ENCODE measurements at regions of chr12 and their contacts with region 1.

Region 1: GRCh38 chr12:9869307-9870161 is at the start of gene CLEC2B:
- DNase-seq: peak in 4 of 14 experiments; percentile 33 to 86 (median 78)
- ATAC-seq: peak; percentile 68
- H3K4me3 ChIP-seq: peak within 1 kb of the TSS; percentile 76
- H3K4me3 Mint-ChIP-seq: peak within 1 kb of the TSS; percentile 92
- H3K27ac ChIP-seq: peak within 1 kb of the TSS; percentile 90 to 91
- H3K27ac Mint-ChIP-seq: peak within 1 kb of the TSS; percentile 98
- H3K4me1 ChIP-seq: peaks cover 7% of the 10 kb centered on the region
- H3K4me1 Mint-ChIP-seq: peaks cover 34% of the 10 kb centered on the region
- H3K27me3 ChIP-seq: no peaks in the 10 kb centered on the region
- H3K27me3 Mint-ChIP-seq: no peaks in the 10 kb centered on the region
- CTCF ChIP-seq: no peak
- total RNA-seq, gene CLEC2B: 152 to 155 TPM

Region 2: DNA sequence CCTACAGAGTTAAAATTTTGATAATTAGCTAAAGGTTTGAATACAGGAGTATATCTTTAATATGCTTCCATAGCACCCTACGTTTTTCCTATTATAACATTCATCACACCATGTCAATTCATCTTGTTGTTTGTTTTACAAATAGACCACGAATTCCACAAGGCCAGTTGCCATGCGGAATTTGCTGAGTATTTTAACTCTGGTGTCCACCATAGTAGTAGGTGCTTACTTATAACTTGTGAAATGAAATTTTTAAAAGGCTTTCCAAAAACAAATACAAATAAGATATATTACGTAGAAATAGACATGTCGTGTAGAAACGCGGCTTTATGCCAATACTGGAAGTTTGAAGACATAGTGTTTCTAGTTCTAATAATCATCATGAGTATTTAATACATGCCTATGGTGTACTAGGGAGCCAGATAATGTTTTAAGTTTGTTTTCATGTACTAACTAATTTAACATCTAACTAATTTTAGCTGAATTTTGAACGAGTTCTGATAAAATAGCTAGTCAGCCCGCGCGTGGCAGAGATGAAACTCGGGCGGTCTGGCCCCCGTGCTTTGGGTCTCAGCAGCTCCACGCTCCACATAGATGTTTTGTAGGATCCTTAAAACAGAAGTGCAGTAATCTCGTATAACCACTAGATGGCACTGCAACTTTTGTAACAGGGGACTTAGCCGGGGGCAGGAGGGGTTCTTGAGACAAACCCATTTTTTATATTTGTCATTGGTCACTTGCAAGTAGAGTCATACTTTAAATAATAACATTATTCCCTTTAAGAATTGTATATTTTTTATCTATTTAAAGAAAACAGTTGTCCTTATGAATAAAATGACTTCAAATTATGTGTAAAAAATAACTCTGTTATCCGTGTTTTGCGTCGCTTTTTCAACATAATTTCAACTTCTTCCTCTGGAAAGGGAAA is 119.0 kb before region 1 on chr12:
- CTCF ChIA-PET with region 1: interaction called, 9 read pairs
- POLR2A ChIA-PET with region 1: interaction called, 145 read pairs
- intact Hi-C with region 1: loop called (anchors 2 to 5 kb)
- DNase-seq: peak in 13 of 14 experiments; percentile 13 to 87 (median 44)
- ATAC-seq: peak; percentile 48
- H3K4me3 ChIP-seq: peak overlapping the region; percentile 10
- H3K4me3 Mint-ChIP-seq: peak overlapping the region; percentile 63
- H3K27ac ChIP-seq: no peak overlapping the region
- H3K27ac Mint-ChIP-seq: peak overlapping the region; percentile 80
- H3K4me1 ChIP-seq: peaks cover 14% of the 10 kb centered on the region
- H3K4me1 Mint-ChIP-seq: peaks cover 54% of the 10 kb centered on the region
- H3K27me3 ChIP-seq: no peaks in the 10 kb centered on the region
- H3K27me3 Mint-ChIP-seq: no peaks in the 10 kb centered on the region
- CTCF ChIP-seq: peak; percentile 86

Region 3: DNA sequence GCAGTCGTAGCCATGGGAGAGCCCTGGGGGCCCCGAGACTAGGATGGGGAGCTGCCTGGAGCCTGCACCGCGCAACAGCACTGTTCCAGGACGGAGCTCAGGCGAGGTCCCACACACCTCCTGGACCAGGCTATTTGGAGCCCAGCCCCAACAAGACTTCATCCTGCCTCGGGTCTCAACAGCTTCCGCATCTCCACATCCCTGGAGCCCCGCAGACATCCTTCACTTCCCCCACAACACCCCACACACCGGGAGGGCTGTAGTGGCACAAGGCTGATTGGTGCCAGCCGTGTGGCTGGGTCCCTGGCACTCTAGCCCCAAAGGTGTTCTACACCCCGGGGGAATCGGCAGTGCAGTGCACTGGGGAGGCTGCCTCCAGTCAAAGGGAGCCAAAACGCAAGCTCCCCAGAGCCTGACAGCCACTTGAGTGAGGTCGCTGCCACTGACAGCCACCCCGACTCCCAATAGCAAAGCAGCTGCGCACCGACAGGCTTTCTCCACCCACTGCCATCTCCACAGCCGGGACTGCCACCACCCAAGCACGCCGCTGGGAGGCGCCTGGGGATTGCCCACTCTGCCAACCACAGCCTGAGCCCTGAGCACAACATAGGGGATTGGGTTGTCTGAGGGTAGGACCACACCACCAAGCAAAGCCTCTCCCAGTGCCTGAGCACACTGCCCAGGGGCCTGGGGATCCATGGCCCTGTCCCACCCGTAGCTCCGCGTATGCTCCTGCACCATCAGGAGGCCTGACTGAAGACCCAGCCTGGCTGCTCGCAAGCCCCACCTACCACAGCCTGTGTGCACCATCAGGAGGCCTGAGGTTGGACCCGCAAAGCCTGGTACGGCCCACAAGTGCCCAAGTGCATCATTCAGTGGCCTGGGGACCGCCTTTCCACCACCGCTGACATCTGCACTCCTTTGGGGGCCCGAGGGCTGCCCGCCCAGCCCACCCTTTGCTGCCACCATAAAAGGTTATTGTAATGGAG is 55.4 kb before region 1 on chr12:
- CTCF ChIA-PET with region 1: interaction called, 8 read pairs
- POLR2A ChIA-PET with region 1: interaction called, 13 read pairs
- intact Hi-C with region 1: loop called (anchors 5 to 10 kb)
- DNase-seq: peak; percentile 88 to 95 (median 92)
- ATAC-seq: peak; percentile 97
- H3K4me3 ChIP-seq: peak overlapping the region; percentile 59
- H3K4me3 Mint-ChIP-seq: peak overlapping the region; percentile 89
- H3K27ac ChIP-seq: peak overlapping the region in 1 of 2 donors; percentile 31
- H3K27ac Mint-ChIP-seq: peak overlapping the region; percentile 92
- H3K4me1 ChIP-seq: peaks cover 12% of the 10 kb centered on the region
- H3K4me1 Mint-ChIP-seq: peaks cover 10% of the 10 kb centered on the region
- H3K27me3 ChIP-seq: peaks cover 0 to 2% of the 10 kb centered on the region in 2 experiments
- H3K27me3 Mint-ChIP-seq: no peaks in the 10 kb centered on the region
- CTCF ChIP-seq: peak; percentile 92

Region 4: GRCh38 chr12:9906873-9907272 is 37.3 kb after region 1 on chr12:
- CTCF ChIA-PET with region 1: no interaction called
- POLR2A ChIA-PET with region 1: interaction called, 42 read pairs
- intact Hi-C with region 1: loop called in 1 of 2 experiments (anchors 2 kb)
- DNase-seq: peak in 9 of 14 experiments; percentile 2 to 86 (median 19)
- ATAC-seq: peak; percentile 96
- H3K4me3 ChIP-seq: no peak overlapping the region
- H3K4me3 Mint-ChIP-seq: peak overlapping the region; percentile 54
- H3K27ac ChIP-seq: no peak overlapping the region
- H3K27ac Mint-ChIP-seq: peak overlapping the region; percentile 68
- H3K4me1 ChIP-seq: peaks cover 12% of the 10 kb centered on the region
- H3K4me1 Mint-ChIP-seq: peaks cover 32% of the 10 kb centered on the region
- H3K27me3 ChIP-seq: no peaks in the 10 kb centered on the region
- H3K27me3 Mint-ChIP-seq: no peaks in the 10 kb centered on the region
- CTCF ChIP-seq: no peak

Region 5: GRCh38 chr12:10212201-10213131 is 342.9 kb after region 1 on chr12 and contains the start of gene GABARAPL1:
- CTCF ChIA-PET with region 1: no interaction called
- POLR2A ChIA-PET with region 1: interaction called, 8 read pairs
- intact Hi-C with region 1: loop called in 1 of 2 experiments (anchors 10 kb)
- DNase-seq: peak; percentile 69 to 95 (median 86)
- ATAC-seq: peak; percentile 75
- H3K4me3 ChIP-seq: peak within 1 kb of the TSS; percentile 87
- H3K4me3 Mint-ChIP-seq: peak within 1 kb of the TSS; percentile 95
- H3K27ac ChIP-seq: peak within 1 kb of the TSS; percentile 77 to 89
- H3K27ac Mint-ChIP-seq: peak within 1 kb of the TSS; percentile 98
- H3K4me1 ChIP-seq: peaks cover 31% of the 10 kb centered on the region
- H3K4me1 Mint-ChIP-seq: peaks cover 31% of the 10 kb centered on the region
- H3K27me3 ChIP-seq: no peaks in the 10 kb centered on the region
- H3K27me3 Mint-ChIP-seq: peaks cover 6% of the 10 kb centered on the region
- CTCF ChIP-seq: no peak
- total RNA-seq, gene GABARAPL1: 267 to 276 TPM

Measured in CD4-positive, alpha-beta T cell (primary cell).